ENCODE measurements at regions of chrX and their contacts with region 1.

Region 1: GRCh38 chrX:15644560-15644872 is 20.1 kb downstream of the CLTRN start:
- DNase-seq: no peak
- H3K4me3 ChIP-seq: no peak overlapping the region
- H3K4me3 Mint-ChIP-seq: no peak overlapping the region
- H3K27ac ChIP-seq: no peak overlapping the region
- H3K27ac Mint-ChIP-seq: no peak overlapping the region
- H3K4me1 ChIP-seq: no peaks in the 10 kb centered on the region
- H3K4me1 Mint-ChIP-seq: peaks cover 7 to 12% (median 10%) of the 10 kb centered on the region in 3 donors
- H3K27me3 ChIP-seq: no peaks in the 10 kb centered on the region
- H3K27me3 Mint-ChIP-seq: peaks cover 8 to 13% of the 10 kb centered on the region in 2 donors

Region 2: DNA sequence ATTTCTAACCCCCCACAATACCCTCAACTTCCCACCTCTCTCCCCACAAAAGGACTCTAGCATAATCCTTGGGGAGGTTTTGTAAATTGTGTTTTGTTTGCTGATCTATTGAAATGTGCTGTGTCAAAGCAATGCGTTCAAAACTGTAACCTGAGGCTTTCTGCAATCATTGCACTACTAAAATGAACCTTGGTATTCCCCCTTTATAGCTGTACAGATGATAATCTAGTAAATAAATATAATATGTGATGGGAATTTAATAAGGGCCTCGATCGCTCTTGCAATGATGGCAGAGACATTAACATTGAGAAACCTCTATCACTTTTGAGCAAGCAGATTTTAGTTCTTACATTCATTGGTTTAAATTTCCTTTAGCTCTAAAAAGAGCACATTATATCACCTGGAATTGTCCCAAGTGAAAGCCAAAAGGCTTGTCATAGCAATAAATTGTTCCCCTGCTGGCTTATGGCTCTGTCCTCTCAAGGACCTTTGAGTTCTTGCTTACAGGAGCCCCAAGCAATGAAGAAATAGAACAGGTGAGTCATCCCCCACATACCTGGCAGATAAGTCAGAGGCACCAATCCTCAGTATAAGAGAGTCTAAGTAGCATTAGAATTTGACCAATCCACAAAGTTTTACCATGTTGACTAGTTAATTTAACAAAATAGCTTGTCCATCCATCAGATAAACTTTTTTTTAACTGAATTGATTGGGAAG is 25.3 kb before region 1 on chrX:
- CTCF ChIA-PET with region 1: no interaction called
- POLR2A ChIA-PET with region 1: no interaction called
- DNase-seq: no peak
- H3K4me3 ChIP-seq: no peak overlapping the region
- H3K4me3 Mint-ChIP-seq: no peak overlapping the region
- H3K27ac ChIP-seq: no peak overlapping the region
- H3K27ac Mint-ChIP-seq: no peak overlapping the region
- H3K4me1 ChIP-seq: no peaks in the 10 kb centered on the region
- H3K4me1 Mint-ChIP-seq: no peaks in the 10 kb centered on the region
- H3K27me3 ChIP-seq: no peaks in the 10 kb centered on the region
- H3K27me3 Mint-ChIP-seq: peaks cover 9 to 10% of the 10 kb centered on the region in 2 donors

Region 3: DNA sequence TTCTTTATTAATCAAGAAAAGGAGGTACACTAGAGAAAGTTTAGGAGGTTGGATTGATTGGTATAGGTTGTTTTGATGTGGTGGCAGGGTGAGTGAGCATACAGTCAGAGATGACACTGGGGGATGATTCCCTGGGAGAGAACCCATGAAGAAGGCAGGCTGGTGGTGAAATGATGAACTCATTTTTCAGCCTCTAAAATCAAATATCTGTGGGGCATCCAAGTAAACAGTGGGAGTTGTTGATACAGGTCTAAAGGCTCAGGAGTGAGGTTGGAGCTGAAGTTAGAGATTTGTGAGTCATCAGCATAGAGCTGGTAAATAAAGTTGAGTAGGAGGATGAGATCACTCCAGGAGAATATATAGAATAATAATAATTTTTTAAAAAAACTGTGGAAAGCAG is 220.1 kb after region 1 on chrX:
- CTCF ChIA-PET with region 1: no interaction called
- POLR2A ChIA-PET with region 1: interaction called, 11 read pairs
- DNase-seq: no peak
- H3K4me3 ChIP-seq: no peak overlapping the region
- H3K4me3 Mint-ChIP-seq: no peak overlapping the region
- H3K27ac ChIP-seq: no peak overlapping the region
- H3K27ac Mint-ChIP-seq: no peak overlapping the region
- H3K4me1 ChIP-seq: no peaks in the 10 kb centered on the region
- H3K4me1 Mint-ChIP-seq: no peaks in the 10 kb centered on the region
- H3K27me3 ChIP-seq: no peaks in the 10 kb centered on the region
- H3K27me3 Mint-ChIP-seq: peaks cover 0 to 9% of the 10 kb centered on the region in 2 donors

Measured in CD8-positive, alpha-beta memory T cell (primary cell).